PC-3 (cell line): ENCODE measurements at regions of chr5 and their contacts with region 1.

Region 1: DNA sequence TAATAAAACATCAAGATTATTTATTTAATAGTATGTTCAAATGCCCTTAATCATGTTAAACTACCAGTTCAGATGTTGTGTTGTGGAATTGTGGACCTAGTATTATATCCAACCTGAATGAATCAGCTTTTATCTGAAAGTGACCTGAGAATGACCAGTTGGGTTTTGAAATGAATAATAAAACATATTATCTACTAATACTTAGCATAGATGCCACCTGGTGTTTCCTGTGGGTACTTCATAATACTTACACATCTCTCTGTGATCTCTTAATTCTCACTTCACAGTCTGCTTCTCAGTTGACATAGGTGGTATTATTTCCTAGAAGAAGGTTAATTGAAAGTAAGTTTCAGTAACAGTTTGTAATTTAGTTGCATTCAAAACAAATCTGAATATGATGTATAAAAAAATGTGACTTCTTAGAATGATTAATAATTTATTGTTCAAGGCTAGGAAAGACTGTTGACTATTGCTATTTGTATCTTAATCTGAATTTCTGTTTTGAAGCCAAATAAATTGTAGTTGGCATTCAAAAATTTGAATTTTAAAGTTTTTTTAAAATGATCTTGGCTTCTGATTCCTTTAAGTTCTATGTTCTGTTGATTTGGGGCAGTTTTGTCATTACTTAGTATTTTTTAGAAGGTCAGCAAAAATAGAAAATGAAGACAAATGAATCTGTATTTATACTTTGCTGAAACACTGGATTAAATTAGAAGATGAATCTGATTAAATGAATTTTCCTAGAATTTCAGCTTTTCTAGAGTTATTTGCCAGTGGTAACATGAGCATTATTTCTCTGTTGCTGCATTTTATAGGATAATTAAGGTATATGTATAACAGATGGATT is 48.2 kb downstream of the KIF2A start:
- DNase-seq: peak; percentile 74
- ATAC-seq: peak; percentile 80
- H3K4me3 ChIP-seq: no peak overlapping the region
- H3K27ac ChIP-seq: no peak overlapping the region
- H3K4me1 ChIP-seq: no peaks in the 10 kb centered on the region
- H3K27me3 ChIP-seq: no peaks in the 10 kb centered on the region
- CTCF ChIP-seq: peak; percentile 68

Region 2: GRCh38 chr5:62231576-62231975 is 122.7 kb before region 1 on chr5:
- CTCF ChIA-PET with region 1: no interaction called
- POLR2A ChIA-PET with region 1: no interaction called
- intact Hi-C with region 1: loop called (anchors 5 kb)
- DNase-seq: no peak
- ATAC-seq: no peak
- H3K4me3 ChIP-seq: no peak overlapping the region
- H3K27ac ChIP-seq: no peak overlapping the region
- H3K4me1 ChIP-seq: peaks cover 6% of the 10 kb centered on the region
- H3K27me3 ChIP-seq: no peaks in the 10 kb centered on the region
- CTCF ChIP-seq: no peak

Region 3: DNA sequence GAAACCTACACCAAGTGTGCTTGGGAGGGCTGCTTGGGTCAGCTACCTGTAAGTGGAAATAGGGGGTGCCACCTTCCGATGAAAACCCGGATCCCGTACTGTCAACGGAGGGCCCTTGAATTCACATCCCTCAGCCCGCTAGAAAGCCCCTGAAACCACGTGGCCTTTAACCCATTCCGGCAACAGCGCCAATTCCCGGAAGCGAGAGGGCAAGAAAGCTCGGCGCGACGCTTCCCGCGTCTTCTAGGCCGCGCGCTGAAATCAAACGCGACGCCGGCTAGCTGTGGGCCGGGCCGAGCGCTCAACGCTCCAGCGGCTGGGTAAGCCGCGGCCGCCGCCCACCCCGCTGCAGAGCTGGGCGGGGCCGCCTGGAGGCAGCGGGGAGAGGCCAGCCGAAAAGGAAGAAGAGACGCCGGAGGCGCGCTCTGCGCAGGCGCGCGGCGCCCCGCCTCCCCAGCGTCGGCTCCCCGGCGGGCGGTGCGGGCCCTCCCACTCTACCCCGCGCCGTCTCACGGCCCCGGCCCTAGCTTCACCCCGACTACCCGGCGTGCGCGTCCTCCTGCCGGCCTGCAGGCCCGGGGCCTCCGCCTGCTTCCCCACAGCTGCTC is 48.4 kb before region 1 on chr5 and contains the start of gene KIF2A:
- CTCF ChIA-PET with region 1: no interaction called
- POLR2A ChIA-PET with region 1: no interaction called
- intact Hi-C with region 1: loop called (anchors 5 kb)
- DNase-seq: peak; percentile 95
- ATAC-seq: peak; percentile 86
- H3K4me3 ChIP-seq: peak within 1 kb of the TSS; percentile 96
- H3K27ac ChIP-seq: peak within 1 kb of the TSS; percentile 56
- H3K4me1 ChIP-seq: peaks cover 21% of the 10 kb centered on the region
- H3K27me3 ChIP-seq: no peaks in the 10 kb centered on the region
- CTCF ChIP-seq: no peak
- total RNA-seq, gene KIF2A: 19.0 and 26.4 TPM in 2 replicates